ENCODE measurements at regions of chr16 and their contacts with region 1.

Region 1: DNA sequence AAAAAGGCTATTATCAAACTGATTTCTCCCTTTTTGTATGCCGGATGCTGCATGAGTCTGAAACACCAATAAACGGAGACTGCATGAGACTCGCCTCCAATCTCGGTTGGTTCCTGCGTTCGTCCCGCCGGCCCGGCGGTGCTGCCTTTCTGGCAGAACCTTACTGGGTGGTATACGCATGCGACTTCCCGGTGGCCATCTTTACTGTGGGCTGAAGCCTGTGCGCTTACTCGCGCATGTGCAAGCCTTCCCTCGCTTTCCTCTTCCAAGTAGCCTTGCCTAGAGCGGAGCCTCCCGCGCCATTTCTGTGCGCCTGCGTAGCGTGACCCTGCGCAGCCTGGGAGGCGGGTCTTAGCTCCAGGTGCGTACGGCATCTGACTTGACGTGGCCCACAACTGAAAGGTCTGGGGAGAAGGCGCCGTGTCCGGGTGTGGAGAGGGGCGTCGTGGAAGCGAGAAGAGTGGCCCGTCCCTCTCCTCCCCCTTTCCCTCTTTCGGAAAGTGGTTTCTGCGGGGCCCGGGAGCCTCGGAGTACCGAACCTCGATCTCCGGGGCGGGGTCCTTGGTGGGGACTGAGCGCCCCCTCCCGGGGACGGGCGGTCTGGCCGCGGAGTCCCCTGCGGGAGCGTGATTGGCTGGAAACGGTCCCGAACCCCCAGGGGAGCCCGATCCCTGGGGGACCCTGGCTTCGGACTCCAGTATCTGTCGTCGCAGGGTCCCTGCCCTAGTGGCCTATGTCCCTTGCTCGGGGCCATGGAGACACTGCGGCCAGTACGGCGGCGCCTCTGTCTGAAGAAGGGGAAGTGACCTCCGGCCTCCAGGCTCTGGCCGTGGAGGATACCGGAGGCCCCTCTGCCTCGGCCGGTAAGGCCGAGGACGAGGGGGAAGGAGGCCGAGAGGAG is at the start of gene PAGR1:
- DNase-seq: peak; percentile 98
- H3K4me3 Mint-ChIP-seq: peak within 1 kb of the TSS; percentile 89
- H3K27ac Mint-ChIP-seq: peak within 1 kb of the TSS; percentile 94
- H3K4me1 Mint-ChIP-seq: peaks cover 38% of the 10 kb centered on the region
- H3K27me3 Mint-ChIP-seq: no peaks in the 10 kb centered on the region
- CTCF ChIP-seq: peak; percentile 94
- total RNA-seq, gene PAGR1: 21.3 and 25.0 TPM in 2 replicates

Region 2: DNA sequence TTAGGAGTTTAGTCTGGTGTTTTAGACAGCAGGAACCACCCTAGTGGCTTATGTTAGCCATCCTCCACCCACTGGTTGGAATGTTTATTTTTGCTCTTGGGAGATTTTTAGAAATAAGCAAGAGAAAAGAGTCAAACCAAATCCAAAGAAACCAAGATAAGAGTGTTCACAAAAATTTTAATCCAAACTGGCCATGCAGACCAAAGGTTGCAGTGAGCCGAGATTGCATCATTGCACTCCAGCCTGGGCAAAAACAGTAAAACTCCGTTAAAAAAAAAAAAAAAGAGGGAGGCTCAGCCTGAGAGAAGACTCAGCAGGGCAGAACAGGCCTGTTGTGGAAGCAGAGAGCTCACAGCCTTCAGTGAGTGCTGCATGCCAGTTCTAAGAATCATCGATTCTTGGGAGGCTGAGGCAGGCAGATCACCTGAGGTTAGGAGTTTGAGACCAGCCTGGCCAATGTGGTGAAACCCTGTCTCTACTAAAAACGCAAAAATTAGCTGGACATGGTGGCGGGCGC is 58.0 kb before region 1 on chr16:
- CTCF ChIA-PET with region 1: no interaction called
- POLR2A ChIA-PET with region 1: no interaction called
- intact Hi-C with region 1: no loop called
- DNase-seq: no peak
- H3K4me3 Mint-ChIP-seq: no peak overlapping the region
- H3K27ac Mint-ChIP-seq: peak overlapping the region; percentile 27
- H3K4me1 Mint-ChIP-seq: no peaks in the 10 kb centered on the region
- H3K27me3 Mint-ChIP-seq: no peaks in the 10 kb centered on the region
- CTCF ChIP-seq: no peak

Region 3: DNA sequence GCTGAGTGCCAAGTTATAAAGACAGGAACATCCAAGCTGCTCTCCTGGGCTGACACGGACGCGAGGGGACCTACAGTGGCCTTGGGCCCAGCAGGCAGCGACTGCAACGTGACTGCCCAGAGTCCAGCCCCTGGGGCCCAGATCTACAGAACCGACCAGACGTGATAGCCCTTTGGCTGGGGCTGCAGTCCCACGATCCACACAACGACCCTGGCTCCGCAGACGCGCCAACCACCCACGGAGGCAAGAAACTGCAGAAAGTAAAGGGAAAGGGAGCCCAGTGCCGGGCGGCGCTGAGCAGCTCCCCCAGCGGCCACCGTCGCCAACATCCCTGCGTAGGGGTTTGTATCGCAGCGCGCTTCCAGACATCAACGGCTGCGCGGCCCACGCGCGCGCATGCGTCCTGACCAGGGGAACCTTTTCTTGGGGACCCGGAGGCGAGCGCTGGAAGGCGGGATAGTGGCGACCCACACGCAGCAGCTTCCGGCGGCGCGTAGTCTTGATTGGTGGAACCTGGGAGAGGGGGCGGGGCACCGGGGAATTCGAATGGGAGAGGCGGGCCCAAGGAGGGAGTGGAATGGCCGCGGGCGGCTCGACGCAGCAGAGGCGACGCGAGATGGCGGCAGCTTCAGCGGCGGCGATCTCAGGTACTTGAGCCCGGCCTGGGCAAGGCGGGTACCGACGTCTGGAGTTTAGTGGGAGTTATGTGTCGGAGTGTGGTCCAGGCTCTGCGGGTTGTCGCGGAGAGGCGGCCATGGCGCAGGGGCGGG is 25.7 kb before region 1 on chr16 and contains the start of gene KIF22:
- CTCF ChIA-PET with region 1: interaction called, 6 read pairs
- POLR2A ChIA-PET with region 1: interaction called, 30 read pairs
- intact Hi-C with region 1: loop called (anchors 1 kb)
- DNase-seq: peak; percentile 99
- H3K4me3 Mint-ChIP-seq: peak within 1 kb of the TSS; percentile 84
- H3K27ac Mint-ChIP-seq: peak within 1 kb of the TSS; percentile 89
- H3K4me1 Mint-ChIP-seq: peaks cover 28% of the 10 kb centered on the region
- H3K27me3 Mint-ChIP-seq: no peaks in the 10 kb centered on the region
- CTCF ChIP-seq: peak; percentile 59
- total RNA-seq, gene KIF22: 36.3 and 53.8 TPM in 2 replicates

Region 4: DNA sequence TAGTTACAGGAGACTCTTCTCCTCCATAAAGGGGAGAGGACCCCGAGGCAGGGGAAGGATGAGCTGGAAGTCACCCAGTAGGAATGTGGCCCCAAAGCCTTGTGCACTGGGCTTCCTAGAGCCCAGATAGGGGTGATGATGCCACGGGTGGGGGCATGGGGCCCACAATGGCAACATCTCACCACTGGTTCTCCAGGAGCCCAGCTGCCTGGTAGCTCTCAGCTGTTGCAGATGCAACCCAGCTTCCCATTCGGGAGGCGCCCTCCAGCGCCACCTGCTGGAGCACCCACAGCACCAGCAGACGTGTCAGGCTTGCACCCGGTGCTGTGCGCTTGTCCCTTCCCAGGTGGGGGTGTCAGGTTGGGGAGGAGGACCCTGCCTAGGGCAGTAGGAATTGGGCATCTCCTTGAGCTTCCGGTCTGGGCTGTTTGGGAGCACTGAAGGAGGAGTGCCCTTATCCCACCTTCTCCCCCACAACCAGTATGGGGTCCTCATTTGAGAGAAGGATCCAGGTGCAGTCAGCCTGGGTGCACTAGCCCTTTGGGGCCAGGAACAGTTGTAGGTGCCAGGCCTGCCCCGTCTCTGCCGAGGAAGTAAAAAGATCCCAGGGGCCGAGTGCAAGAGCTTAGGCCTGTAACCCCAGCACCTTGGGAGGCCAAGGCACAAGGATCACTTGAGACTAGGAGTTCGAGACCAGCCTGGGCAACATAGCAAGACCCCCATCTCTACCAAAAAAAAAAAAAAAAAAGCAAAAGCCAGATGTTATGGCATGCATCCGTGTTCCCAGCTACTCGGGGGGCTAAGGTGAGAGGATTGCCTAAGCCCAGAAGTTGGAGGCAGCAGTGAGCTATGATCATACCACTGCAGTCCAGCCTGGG is 32.6 kb after region 1 on chr16:
- CTCF ChIA-PET with region 1: interaction called, 52 read pairs
- POLR2A ChIA-PET with region 1: interaction called, 20 read pairs
- intact Hi-C with region 1: loop called (anchors 1 kb)
- DNase-seq: peak; percentile 73
- H3K4me3 Mint-ChIP-seq: no peak overlapping the region
- H3K27ac Mint-ChIP-seq: no peak overlapping the region
- H3K4me1 Mint-ChIP-seq: no peaks in the 10 kb centered on the region
- H3K27me3 Mint-ChIP-seq: no peaks in the 10 kb centered on the region
- CTCF ChIP-seq: peak; percentile 90

Region 5: GRCh38 chr16:29943846-29944669 is 128.0 kb after region 1 on chr16:
- CTCF ChIA-PET with region 1: interaction called, 3 read pairs
- POLR2A ChIA-PET with region 1: interaction called, 10 read pairs
- intact Hi-C with region 1: no loop called
- DNase-seq: peak; percentile 96
- H3K4me3 Mint-ChIP-seq: peak overlapping the region; percentile 24
- H3K27ac Mint-ChIP-seq: peak overlapping the region; percentile 65
- H3K4me1 Mint-ChIP-seq: peaks cover 8% of the 10 kb centered on the region
- H3K27me3 Mint-ChIP-seq: no peaks in the 10 kb centered on the region
- CTCF ChIP-seq: no peak

Region 6: DNA sequence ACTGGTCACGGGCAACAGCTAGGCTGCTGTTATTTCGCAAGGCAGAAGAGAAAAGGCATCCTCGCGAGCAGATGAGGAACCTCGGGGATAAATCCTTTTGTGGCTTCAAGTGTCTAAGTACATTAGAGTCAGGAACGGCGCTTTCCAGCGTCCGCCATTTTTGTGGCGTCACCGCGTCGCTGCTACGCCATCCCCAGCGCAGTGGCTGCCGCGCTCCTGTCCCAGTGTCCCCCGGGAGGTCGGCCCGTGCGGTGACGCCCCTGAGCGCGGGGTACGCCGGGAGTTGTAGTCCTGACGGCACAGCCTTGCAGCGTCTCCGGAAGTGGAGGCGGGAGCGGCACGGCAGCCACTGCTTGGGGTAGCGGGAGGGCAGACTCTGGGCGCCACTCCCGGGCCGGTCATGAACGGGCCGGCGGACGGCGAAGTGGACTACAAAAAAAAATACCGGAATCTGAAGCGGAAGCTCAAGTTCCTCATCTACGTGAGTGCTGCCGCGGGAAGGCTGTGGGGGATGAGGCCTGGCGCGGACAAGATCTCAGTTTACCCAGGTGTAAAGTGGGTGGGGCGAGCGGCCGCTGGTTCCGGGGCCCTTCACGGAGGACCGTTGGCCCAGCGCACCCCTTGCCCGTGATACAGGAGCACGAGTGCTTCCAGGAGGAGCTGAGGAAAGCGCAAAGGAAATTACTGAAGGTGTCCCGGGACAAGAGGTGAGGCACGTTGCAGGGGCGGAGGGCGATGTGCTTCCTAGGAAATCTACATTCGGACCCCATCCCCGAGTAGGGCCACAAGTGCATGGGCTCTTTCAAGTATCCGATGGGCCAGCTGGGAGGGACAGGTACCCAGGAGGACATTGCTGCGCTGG is 180.1 kb after region 1 on chr16 and contains the start of gene INO80E:
- CTCF ChIA-PET with region 1: interaction called, 9 read pairs
- POLR2A ChIA-PET with region 1: interaction called, 9 read pairs
- intact Hi-C with region 1: loop called (anchors 5 kb)
- DNase-seq: peak; percentile 96
- H3K4me3 Mint-ChIP-seq: peak within 1 kb of the TSS; percentile 98
- H3K27ac Mint-ChIP-seq: peak within 1 kb of the TSS; percentile 95
- H3K4me1 Mint-ChIP-seq: peaks cover 11% of the 10 kb centered on the region
- H3K27me3 Mint-ChIP-seq: no peaks in the 10 kb centered on the region
- CTCF ChIP-seq: no peak
- total RNA-seq, gene INO80E: 82.0 and 90.1 TPM in 2 replicates

Region 7: GRCh38 chr16:30032083-30032819 is 216.2 kb after region 1 on chr16:
- CTCF ChIA-PET with region 1: interaction called, 11 read pairs
- POLR2A ChIA-PET with region 1: no interaction called
- intact Hi-C with region 1: no loop called
- DNase-seq: peak; percentile 72
- H3K4me3 Mint-ChIP-seq: no peak overlapping the region
- H3K27ac Mint-ChIP-seq: no peak overlapping the region
- H3K4me1 Mint-ChIP-seq: no peaks in the 10 kb centered on the region
- H3K27me3 Mint-ChIP-seq: peaks cover 34% of the 10 kb centered on the region
- CTCF ChIP-seq: peak; percentile 84

Measured in MCF 10A (cell line).